Common myeloid progenitor, CD34-positive (primary cell): ENCODE measurements at regions of chr6 and their contacts with region 1.

Region 1: GRCh38 chr6:31163922-31164321 is 5.5 kb downstream of the TCF19 start:
- DNase-seq: no peak
- H3K4me3 ChIP-seq: no peak overlapping the region
- H3K27ac ChIP-seq: no peak overlapping the region
- H3K4me1 ChIP-seq: peaks cover 2 to 12% (median 10%) of the 10 kb centered on the region in 4 experiments
- H3K27me3 ChIP-seq: no peaks in the 10 kb centered on the region

Region 2: GRCh38 chr6:31107052-31107451 is 56.9 kb before region 1 on chr6:
- CTCF ChIA-PET with region 1: no interaction called
- POLR2A ChIA-PET with region 1: no interaction called
- DNase-seq: no peak
- H3K4me3 ChIP-seq: no peak overlapping the region
- H3K27ac ChIP-seq: no peak overlapping the region
- H3K4me1 ChIP-seq: no peaks in the 10 kb centered on the region
- H3K27me3 ChIP-seq: no peaks in the 10 kb centered on the region

Region 3: DNA sequence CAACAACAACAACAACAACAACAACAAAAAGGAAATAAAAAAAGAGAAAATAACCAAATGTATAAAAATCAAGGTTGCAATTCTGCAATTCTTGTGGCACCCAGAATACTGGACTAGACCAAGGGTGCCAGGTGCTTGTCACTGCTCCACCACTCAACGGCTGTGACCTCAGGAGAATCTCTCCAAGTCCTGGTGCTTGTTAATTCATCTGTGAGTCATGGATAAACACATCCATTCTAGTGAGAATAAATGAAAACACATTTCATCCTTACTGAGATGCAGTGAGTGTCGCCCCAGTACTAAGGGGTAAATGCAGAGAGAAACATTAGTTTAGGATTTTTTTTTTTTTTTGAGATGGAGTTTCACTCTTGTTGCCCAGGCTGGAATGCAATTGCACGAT is 75.9 kb after region 1 on chr6:
- CTCF ChIA-PET with region 1: no interaction called
- POLR2A ChIA-PET with region 1: interaction called, 13 read pairs
- DNase-seq: no peak
- H3K4me3 ChIP-seq: no peak overlapping the region
- H3K27ac ChIP-seq: no peak overlapping the region
- H3K4me1 ChIP-seq: no peaks in the 10 kb centered on the region
- H3K27me3 ChIP-seq: no peaks in the 10 kb centered on the region

Region 4: DNA sequence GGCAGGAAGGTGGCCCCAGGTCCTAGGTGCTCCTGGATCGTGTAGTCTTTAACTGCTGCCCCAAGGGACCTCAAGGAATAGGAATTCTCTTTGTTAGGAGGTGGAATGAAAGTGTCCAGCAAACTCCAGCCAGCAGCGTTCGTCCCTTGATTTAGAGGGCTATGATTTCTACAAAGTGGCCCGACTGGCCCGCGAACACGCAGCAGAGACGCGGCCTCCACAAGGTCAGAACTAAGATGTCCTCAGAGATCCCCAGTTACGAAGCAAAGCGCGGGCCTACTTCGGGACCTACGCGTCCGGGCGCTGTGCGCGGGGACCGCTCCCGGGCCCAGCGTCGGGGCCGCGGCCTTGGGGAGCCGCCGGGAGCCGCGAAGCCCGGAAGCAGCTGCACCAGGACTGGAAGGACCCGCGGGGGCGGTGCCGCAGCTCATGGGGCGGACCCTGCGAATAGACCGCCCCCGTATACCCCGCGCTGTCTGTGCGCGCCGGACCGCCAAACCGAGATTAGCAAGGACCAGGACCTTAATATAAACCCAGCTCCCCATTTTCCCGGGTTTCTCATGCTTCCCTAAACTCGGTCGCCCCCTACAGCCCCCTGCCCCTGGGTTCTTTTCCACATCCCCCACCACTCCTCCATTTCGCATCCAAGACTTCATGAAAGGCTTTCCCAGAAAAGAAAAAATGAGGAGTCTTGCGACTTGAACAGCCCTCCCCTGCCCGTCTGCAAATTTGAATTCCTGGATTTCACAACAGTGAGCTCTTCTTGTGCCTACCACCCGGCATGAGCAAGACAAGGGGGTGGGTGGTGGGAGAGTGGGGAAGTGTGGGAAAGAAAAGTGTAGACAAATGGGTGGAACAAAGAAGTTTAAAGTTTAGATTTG is 496.7 kb after region 1 on chr6 and contains the start of gene C6orf47:
- CTCF ChIA-PET with region 1: no interaction called
- POLR2A ChIA-PET with region 1: no interaction called
- DNase-seq: peak; percentile 68 to 76 (median 72)
- H3K4me3 ChIP-seq: peak within 1 kb of the TSS; percentile 73 to 94 (median 80)
- H3K27ac ChIP-seq: peak within 1 kb of the TSS; percentile 74 to 86
- H3K4me1 ChIP-seq: peaks cover 10 to 70% (median 49%) of the 10 kb centered on the region in 4 experiments
- H3K27me3 ChIP-seq: no peaks in the 10 kb centered on the region